ENCODE measurements at regions of chrX and their contacts with region 1.

Region 1: DNA sequence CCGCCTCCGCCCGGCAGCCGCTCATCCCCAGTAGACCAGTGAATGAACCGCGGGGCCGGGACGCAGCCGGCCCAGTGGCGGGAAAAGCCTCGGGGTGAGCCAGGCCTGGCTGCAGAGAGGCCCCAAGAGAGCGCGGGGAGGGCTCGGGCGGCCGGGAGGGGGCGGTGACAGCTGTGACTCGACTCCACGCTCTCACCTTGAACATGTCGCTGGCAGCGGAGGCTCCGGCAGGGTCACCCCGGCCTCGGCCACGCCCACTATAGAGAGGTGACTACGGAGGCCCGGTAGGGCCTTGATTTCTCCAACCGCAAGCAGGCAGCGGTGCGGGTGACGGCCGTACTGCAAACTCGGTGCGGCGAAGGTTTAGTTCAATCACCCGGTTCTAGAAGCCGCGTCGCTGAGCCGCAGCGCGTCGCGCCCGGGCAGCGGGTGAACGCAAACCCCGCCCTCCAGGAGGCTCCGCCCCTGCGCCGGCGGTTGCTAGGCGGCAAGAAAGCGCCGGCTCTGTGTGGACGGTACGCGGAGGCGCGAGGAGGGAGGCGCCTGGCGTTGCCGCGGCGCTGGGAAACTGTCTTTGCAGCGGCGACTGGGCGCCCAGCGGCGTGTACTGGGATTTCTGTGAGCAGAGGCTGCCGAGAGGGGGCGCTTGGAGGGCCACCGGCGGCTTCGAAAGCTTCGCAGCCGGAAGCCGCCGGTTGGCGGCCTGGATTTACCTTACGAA is at the starts of genes APOO and CXorf58:
- DNase-seq: peak; percentile 79 to 96 (median 88)
- ATAC-seq: peak; percentile 90
- H3K4me3 ChIP-seq: peak within 1 kb of the TSS; percentile 59 to 71
- H3K4me3 Mint-ChIP-seq: peak within 1 kb of the TSS; percentile 82
- H3K27ac ChIP-seq: peak within 1 kb of the TSS; percentile 89 to 91
- H3K27ac Mint-ChIP-seq: peak within 1 kb of the TSS; percentile 91
- H3K4me1 ChIP-seq: peaks cover 13% of the 10 kb centered on the region
- H3K4me1 Mint-ChIP-seq: peaks cover 16% of the 10 kb centered on the region
- H3K27me3 ChIP-seq: no peaks in the 10 kb centered on the region
- H3K27me3 Mint-ChIP-seq: no peaks in the 10 kb centered on the region
- CTCF ChIP-seq: peak; percentile 41
- total RNA-seq, gene APOO: 7.6 to 8.2 TPM
- total RNA-seq, gene CXorf58: not detected

Region 2: GRCh38 chrX:22135994-22136684 is 1771.5 kb before region 1 on chrX:
- CTCF ChIA-PET with region 1: no interaction called
- POLR2A ChIA-PET with region 1: no interaction called
- intact Hi-C with region 1: loop called (anchors 5 to 10 kb)
- DNase-seq: peak in 5 of 9 experiments; percentile 3 to 56 (median 25)
- ATAC-seq: no peak
- H3K4me3 ChIP-seq: no peak overlapping the region
- H3K4me3 Mint-ChIP-seq: peak overlapping the region; percentile 71
- H3K27ac ChIP-seq: no peak overlapping the region
- H3K27ac Mint-ChIP-seq: no peak overlapping the region
- H3K4me1 ChIP-seq: no peaks in the 10 kb centered on the region
- H3K4me1 Mint-ChIP-seq: peaks cover 9% of the 10 kb centered on the region
- H3K27me3 ChIP-seq: no peaks in the 10 kb centered on the region
- H3K27me3 Mint-ChIP-seq: no peaks in the 10 kb centered on the region
- CTCF ChIP-seq: peak; percentile 57

Region 3: DNA sequence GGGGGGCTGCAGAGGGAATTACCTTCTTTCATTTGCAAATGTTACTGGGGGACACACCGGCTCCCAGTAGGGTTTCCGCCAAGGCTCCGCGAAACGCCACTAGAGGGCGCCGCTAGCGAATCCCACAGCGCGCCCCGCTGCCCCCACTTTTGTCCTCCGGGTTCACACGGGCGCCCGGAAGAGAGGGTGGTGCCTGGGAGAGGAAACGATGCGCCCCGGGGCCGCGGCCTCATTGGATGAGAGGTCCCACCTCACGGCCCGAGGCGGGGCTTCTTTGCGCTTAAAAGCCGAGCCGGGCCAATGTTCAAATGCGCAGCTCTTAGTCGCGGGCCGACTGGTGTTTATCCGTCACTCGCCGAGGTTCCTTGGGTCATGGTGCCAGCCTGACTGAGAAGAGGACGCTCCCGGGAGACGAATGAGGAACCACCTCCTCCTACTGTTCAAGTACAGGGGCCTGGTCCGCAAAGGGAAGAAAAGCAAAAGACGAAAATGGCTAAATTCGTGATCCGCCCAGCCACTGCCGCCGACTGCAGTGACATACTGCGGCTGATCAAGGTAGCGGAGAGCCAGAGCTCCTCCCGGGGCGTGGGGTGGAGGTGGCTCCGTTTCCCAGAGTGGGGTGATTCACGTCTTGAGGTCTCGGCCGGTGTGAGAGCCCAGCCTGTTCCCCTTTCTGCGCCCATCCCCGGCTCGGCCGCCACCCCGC is 124.6 kb before region 1 on chrX and contains the start of gene SAT1:
- CTCF ChIA-PET with region 1: interaction called, 27 read pairs
- POLR2A ChIA-PET with region 1: interaction called, 6 read pairs
- intact Hi-C with region 1: loop called (anchors 1 kb)
- DNase-seq: peak; percentile 86 to 96 (median 92)
- ATAC-seq: peak; percentile 88
- H3K4me3 ChIP-seq: peak within 1 kb of the TSS; percentile 91 to 94
- H3K4me3 Mint-ChIP-seq: peak within 1 kb of the TSS; percentile 97
- H3K27ac ChIP-seq: peak within 1 kb of the TSS; percentile 92 to 96
- H3K27ac Mint-ChIP-seq: peak within 1 kb of the TSS; percentile 99
- H3K4me1 ChIP-seq: peaks cover 25% of the 10 kb centered on the region
- H3K4me1 Mint-ChIP-seq: peaks cover 35% of the 10 kb centered on the region
- H3K27me3 ChIP-seq: no peaks in the 10 kb centered on the region
- H3K27me3 Mint-ChIP-seq: no peaks in the 10 kb centered on the region
- CTCF ChIP-seq: peak; percentile 60
- total RNA-seq, gene SAT1: 270 to 285 TPM

Region 4: DNA sequence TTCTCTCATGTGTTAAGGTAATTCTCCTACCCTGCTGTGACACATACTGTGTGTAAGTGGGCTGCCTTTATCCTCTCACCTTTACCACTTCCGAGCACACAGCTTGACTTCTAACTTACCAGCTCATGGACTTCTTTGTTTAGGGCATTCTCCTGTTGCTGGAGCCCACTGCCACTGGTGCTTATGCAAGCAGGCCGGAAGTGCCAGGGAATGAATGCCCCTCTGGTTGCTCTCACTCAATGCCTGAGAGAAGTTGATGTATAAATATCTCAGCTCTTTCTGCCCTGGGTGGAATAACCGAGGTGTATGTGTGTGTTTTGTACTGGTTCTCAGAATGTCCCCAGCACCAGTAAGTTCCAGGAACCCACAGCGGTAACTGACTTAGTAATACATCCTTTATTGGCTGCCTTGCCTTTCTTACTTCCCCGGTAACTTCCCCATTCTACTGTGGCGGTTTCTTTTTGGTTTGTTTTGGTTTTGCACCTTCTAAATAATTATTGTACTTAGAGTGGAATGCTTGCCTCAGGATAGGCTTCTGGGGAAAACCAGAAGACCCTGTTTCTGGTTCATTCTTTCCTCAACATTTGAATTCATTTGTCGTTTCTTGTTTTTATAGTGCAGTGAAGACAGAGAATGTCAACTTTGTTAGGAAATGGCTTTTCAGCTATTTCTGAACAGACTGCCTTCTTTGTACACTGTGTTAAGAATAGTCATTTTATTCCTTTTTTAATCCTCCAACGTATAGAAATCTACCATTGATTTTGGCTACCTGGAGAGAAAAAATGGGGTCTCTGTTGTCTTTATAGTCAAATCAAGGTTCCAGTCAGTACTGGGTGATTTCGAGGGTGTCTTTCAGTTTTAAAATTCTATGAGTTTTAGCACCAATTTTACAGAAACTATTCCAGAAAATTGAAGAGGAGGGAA is 45.6 kb after region 1 on chrX:
- CTCF ChIA-PET with region 1: interaction called, 7 read pairs
- POLR2A ChIA-PET with region 1: interaction called, 5 read pairs
- intact Hi-C with region 1: loop called (anchors 1 to 5 kb)
- DNase-seq: peak; percentile 0 to 72 (median 32)
- ATAC-seq: peak; percentile 83
- H3K4me3 ChIP-seq: peak overlapping the region; percentile 47 to 51
- H3K4me3 Mint-ChIP-seq: peak overlapping the region; percentile 86
- H3K27ac ChIP-seq: peak overlapping the region; percentile 70 to 76
- H3K27ac Mint-ChIP-seq: peak overlapping the region; percentile 95
- H3K4me1 ChIP-seq: peaks cover 11% of the 10 kb centered on the region
- H3K4me1 Mint-ChIP-seq: peaks cover 27% of the 10 kb centered on the region
- H3K27me3 ChIP-seq: no peaks in the 10 kb centered on the region
- H3K27me3 Mint-ChIP-seq: no peaks in the 10 kb centered on the region
- CTCF ChIP-seq: no peak

Region 5: GRCh38 chrX:24024819-24025740 is 117.4 kb after region 1 on chrX:
- CTCF ChIA-PET with region 1: interaction called, 5 read pairs
- POLR2A ChIA-PET with region 1: interaction called, 11 read pairs
- intact Hi-C with region 1: loop called (anchors 1 kb)
- DNase-seq: peak; percentile 62 to 89 (median 75)
- ATAC-seq: peak; percentile 90
- H3K4me3 ChIP-seq: peak overlapping the region; percentile 67 to 82
- H3K4me3 Mint-ChIP-seq: peak overlapping the region; percentile 87
- H3K27ac ChIP-seq: peak overlapping the region; percentile 85 to 87
- H3K27ac Mint-ChIP-seq: peak overlapping the region; percentile 64
- H3K4me1 ChIP-seq: peaks cover 13% of the 10 kb centered on the region
- H3K4me1 Mint-ChIP-seq: peaks cover 24% of the 10 kb centered on the region
- H3K27me3 ChIP-seq: no peaks in the 10 kb centered on the region
- H3K27me3 Mint-ChIP-seq: no peaks in the 10 kb centered on the region
- CTCF ChIP-seq: no peak

Region 6: GRCh38 chrX:24150051-24150790 is 242.6 kb after region 1 on chrX:
- CTCF ChIA-PET with region 1: no interaction called
- POLR2A ChIA-PET with region 1: interaction called, 3 read pairs
- intact Hi-C with region 1: loop called (anchors 1 to 5 kb)
- DNase-seq: peak; percentile 61 to 93 (median 83)
- ATAC-seq: peak; percentile 72
- H3K4me3 ChIP-seq: peak overlapping the region; percentile 66 to 75
- H3K4me3 Mint-ChIP-seq: peak overlapping the region; percentile 83
- H3K27ac ChIP-seq: peak overlapping the region; percentile 88
- H3K27ac Mint-ChIP-seq: peak overlapping the region; percentile 93
- H3K4me1 ChIP-seq: peaks cover 32% of the 10 kb centered on the region
- H3K4me1 Mint-ChIP-seq: peaks cover 59% of the 10 kb centered on the region
- H3K27me3 ChIP-seq: no peaks in the 10 kb centered on the region
- H3K27me3 Mint-ChIP-seq: no peaks in the 10 kb centered on the region
- CTCF ChIP-seq: peak; percentile 15

Region 7: DNA sequence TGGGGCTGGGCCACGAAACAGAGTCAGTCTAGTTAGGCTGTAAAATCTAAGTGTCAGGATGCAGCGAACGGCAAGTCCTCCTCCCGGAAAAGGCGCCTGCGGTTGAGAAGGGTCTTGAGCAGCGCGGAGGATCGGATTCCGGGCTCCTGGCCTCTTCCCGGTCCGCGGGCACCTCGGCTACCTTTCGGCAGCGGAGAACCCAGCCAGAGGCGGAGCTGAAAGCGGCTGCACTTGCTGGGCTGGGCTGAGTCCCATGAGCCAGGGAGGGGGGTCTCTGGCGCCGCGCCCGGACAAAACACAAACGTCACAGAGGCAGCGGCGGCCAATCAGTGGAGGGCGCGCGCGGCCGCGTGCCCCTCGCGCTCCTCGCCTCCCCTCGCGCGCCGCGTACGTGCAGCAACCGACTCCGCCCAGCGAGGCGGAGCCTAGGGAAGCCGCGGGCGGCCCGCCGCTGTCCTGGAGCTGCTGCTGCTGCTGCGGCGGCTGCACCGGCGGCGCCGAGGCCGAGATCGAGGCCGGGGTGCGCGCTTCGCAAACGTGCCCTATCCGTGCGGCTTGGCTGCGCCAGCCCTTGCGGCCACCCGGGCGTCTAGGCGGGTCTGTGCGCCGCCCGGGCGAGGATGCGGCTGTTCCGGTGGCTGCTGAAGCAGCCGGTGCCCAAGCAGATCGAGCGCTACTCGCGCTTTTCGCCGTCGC is 557.3 kb after region 1 on chrX and contains the start of gene PDK3:
- CTCF ChIA-PET with region 1: no interaction called
- POLR2A ChIA-PET with region 1: no interaction called
- intact Hi-C with region 1: loop called (anchors 5 to 10 kb)
- DNase-seq: peak; percentile 77 to 94 (median 87)
- ATAC-seq: peak; percentile 94
- H3K4me3 ChIP-seq: peak within 1 kb of the TSS; percentile 60 to 81
- H3K4me3 Mint-ChIP-seq: peak within 1 kb of the TSS; percentile 83
- H3K27ac ChIP-seq: peak within 1 kb of the TSS; percentile 77 to 86
- H3K27ac Mint-ChIP-seq: peak within 1 kb of the TSS; percentile 94
- H3K4me1 ChIP-seq: peaks cover 36% of the 10 kb centered on the region
- H3K4me1 Mint-ChIP-seq: peaks cover 39% of the 10 kb centered on the region
- H3K27me3 ChIP-seq: no peaks in the 10 kb centered on the region
- H3K27me3 Mint-ChIP-seq: no peaks in the 10 kb centered on the region
- CTCF ChIP-seq: no peak
- total RNA-seq, gene PDK3: 13.3 to 16.8 TPM